Posterior vena cava (tissue), 2 donors: ENCODE measurements at regions of chr2 and their contacts with region 1.

Region 1: DNA sequence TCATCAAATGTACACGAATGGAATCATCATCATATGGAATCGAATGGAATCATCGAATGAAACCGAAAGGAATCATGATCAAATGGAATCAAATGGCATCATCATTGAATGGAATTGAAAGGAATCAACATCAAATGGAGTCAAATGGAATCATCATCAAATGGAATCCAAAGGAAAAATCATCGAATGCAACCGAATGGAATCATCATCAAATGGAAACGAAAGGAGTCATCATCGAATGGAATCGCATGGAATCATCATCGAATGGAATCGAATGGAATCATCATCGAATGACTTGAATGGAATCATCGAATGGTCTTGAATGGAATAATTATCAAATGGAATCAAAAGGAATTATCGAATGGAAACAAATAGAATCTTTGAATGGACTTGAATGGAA is 1116.2 kb downstream of the RPIA start:
- DNase-seq: no peak

Region 2: GRCh38 chr2:88372042-88372441 is 1435.6 kb before region 1 on chr2:
- intact Hi-C with region 1: loop called in 1 of 2 experiments (anchors 5 kb)
- DNase-seq: no peak

Region 3: DNA sequence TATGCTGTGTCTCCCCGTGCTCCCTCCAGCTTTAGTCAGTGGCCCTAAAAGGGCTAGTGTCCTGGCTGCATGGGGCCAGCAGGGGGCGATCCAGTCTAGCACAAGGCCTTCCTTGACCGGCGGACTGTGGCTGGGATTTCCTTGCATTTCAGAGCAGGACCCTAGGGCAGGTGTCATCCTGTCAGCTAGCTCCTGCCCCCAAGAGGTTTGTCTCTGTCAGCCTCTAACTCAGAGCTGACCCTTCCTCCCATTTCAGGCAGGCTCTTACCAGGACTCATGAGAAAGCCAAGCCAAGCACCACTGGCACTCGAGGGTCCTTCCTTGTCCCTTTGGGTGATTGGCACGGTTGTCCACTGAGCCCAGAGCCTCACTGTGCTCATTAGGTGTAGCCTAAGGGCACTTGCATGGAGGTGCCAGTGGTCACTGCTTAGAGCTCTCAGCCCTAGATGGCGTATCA is 975.9 kb before region 1 on chr2:
- intact Hi-C with region 1: no loop called
- DNase-seq: peak; percentile 89